ENCODE measurements at regions of chr17 and their contacts with region 1.

Region 1: GRCh38 chr17:8138672-8139371 is 13.4 kb downstream of the PER1 start:
- DNase-seq: peak; percentile 95 to 96
- ATAC-seq: peak; percentile 91 to 97 (median 94)
- H3K4me3 ChIP-seq: peak overlapping the region in 7 of 10 donors; percentile 6 to 40 (median 21)
- H3K27ac ChIP-seq: peak overlapping the region; percentile 30 to 84 (median 72)
- H3K4me1 ChIP-seq: peaks cover 2 to 40% (median 28%) of the 10 kb centered on the region in 9 donors
- H3K27me3 ChIP-seq: no peaks in the 10 kb centered on the region
- CTCF ChIP-seq: peak; percentile 84 to 94 (median 90)

Region 2: DNA sequence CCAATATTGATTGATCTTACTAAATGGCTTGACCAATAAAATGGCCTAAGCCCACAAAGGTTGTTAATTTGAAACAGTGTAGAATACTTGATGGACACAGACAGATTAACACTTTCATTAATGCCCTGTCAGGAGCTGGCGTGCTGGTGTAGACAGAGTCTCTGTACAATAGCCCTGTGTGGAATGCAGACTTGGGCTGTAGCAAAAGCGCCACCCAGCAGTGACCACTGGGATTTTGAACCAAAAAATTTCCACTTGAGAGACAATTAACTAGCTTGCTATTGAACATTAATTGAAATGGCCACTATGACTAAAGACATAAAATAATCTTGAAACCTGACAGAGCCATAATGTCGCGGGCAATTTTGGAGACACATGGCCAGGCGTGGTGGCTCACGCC is 156.2 kb before region 1 on chr17:
- intact Hi-C with region 1: no loop called
- DNase-seq: no peak
- ATAC-seq: no peak
- H3K4me3 ChIP-seq: no peak overlapping the region
- H3K27ac ChIP-seq: no peak overlapping the region
- H3K4me1 ChIP-seq: peaks cover 0 to 7% (median 0%) of the 10 kb centered on the region in 9 donors
- H3K27me3 ChIP-seq: peaks cover 0 to 50% (median 12%) of the 10 kb centered on the region in 7 donors
- CTCF ChIP-seq: peak in 1 of 9 donors; percentile 14

Region 3: DNA sequence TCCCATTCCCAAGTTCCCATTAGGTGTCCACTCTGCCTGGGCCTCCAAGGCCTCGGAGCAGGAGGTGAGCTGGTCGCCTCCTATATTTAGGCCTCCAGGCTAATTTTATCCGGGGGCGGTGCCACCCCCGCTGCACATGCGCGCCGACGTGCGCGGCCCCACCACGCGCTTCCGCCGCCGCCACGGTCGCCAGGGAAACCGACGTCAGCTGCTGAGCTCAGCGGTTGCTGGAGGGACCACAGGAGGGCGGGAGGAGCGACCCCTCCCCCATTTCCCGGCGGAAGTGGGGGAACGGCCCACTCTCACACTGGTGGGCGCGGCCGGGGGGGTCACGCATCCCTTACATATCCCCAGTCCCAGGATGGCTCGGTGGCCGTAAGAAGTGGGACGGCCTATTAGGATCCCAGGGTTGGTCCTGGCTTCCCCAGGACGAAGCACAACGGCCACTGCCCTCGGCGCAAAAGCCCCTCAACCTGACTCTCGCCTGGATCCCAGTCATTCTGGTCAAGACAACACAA is 12.4 kb after region 1 on chr17:
- intact Hi-C with region 1: loop called in 5 of 10 experiments (anchors 1 to 2 kb)
- DNase-seq: peak; percentile 94 to 96
- ATAC-seq: peak; percentile 44 to 62 (median 52)
- H3K4me3 ChIP-seq: peak overlapping the region; percentile 53 to 96 (median 78)
- H3K27ac ChIP-seq: peak overlapping the region; percentile 97 to 100 (median 100)
- H3K4me1 ChIP-seq: peaks cover 28 to 76% (median 53%) of the 10 kb centered on the region in 9 donors
- H3K27me3 ChIP-seq: no peaks in the 10 kb centered on the region
- CTCF ChIP-seq: no peak

Region 4: GRCh38 chr17:8156246-8156992 is 17.6 kb after region 1 on chr17:
- intact Hi-C with region 1: loop called in 7 of 10 experiments (anchors 1 to 2 kb)
- DNase-seq: peak; percentile 100
- ATAC-seq: peak; percentile 65 to 75 (median 68)
- H3K4me3 ChIP-seq: peak overlapping the region; percentile 66 to 91 (median 81)
- H3K27ac ChIP-seq: peak overlapping the region; percentile 97 to 100 (median 100)
- H3K4me1 ChIP-seq: peaks cover 19 to 91% (median 51%) of the 10 kb centered on the region in 9 donors
- H3K27me3 ChIP-seq: no peaks in the 10 kb centered on the region
- CTCF ChIP-seq: peak in 4 of 9 donors; percentile 12 to 42 (median 28)

Region 5: DNA sequence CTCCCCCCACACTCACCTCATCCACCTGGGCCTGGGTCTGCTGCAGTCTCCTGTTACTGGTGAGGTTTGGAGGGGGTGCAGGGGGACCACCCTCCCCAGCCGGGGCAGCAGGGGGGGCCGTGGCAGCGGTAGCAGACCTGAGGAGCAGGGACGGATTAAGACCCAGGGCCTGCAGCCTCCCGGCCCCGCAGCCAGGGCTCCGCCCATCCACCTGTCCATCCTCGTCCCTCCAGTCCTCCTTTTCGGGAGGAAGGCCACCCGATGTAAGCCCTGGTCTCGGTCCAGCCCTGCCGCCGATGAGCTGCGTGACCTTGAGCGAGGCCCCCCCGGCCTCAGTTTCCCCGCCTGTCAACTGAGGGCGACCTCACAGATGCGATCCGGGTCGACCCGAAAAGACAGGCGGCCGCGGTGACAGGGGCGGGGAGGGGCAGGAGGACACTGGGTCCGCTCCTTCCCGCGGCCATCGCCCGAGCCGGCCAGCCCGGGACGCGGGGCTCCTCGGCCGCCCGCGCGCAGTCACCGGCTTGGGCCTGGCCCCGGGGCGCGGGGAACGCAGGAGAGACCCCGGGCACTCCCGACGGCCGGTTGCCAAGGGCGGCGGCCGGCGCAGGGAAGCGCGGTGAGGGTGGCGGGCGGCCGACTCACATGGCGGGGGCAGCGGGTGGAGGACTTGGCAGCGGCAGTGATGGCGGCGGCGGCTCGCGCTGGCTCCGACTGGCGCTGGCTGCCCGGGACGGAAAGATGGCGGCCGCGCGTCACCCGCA is 23.6 kb after region 1 on chr17 and contains the start of gene VAMP2:
- intact Hi-C with region 1: loop called in 4 of 10 experiments (anchors 1 to 2 kb)
- DNase-seq: peak; percentile 81 to 86
- ATAC-seq: peak; percentile 20 to 79 (median 58)
- H3K4me3 ChIP-seq: peak within 1 kb of the TSS; percentile 80 to 100 (median 99)
- H3K27ac ChIP-seq: peak within 1 kb of the TSS; percentile 97 to 100 (median 100)
- H3K4me1 ChIP-seq: peaks cover 25 to 71% (median 57%) of the 10 kb centered on the region in 9 donors
- H3K27me3 ChIP-seq: no peaks in the 10 kb centered on the region
- CTCF ChIP-seq: peak in 1 of 9 donors; percentile 23
- total RNA-seq, gene VAMP2: 46.8 to 67.8 (median 62.7) TPM

Region 6: DNA sequence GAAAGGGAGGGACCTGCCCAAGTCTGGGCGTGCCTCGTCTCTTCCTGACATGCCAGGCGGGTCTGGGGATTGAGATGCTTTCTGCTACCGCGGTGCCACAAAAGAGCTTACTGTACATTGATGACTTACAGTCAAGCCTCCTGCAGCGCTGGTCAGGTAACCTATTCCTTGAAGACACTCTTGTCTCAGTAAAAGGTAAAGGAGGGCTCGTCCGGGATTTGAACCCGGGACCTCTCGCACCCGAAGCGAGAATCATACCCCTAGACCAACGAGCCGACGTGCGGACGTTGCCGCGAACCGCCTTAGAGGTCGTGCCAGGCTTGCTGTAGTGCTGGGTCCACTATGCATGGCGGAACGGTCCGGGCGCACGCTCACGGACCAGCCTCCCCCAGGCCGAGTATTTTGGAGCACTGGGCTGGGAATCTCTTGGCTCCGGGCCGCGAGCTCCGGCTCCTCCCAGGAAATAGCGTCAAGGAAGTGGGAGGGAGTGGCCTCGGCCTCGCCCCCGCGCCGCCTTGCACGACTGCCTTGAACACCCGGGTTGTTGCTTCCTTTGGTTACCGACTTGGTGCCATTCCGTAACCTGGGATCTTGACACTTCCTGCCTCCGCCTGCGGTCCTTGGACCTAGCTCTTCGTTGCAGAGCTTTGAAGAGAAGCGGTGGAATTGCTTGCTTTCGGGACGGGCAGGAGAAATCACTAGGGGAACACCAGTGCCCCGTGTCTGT is 84.0 kb after region 1 on chr17:
- intact Hi-C with region 1: loop called in 1 of 10 experiments (anchors 5 kb)
- DNase-seq: peak; percentile 95
- ATAC-seq: peak; percentile 72 to 85 (median 79)
- H3K4me3 ChIP-seq: peak overlapping the region; percentile 45 to 92 (median 66)
- H3K27ac ChIP-seq: peak overlapping the region; percentile 94 to 99 (median 97)
- H3K4me1 ChIP-seq: peaks cover 7 to 68% (median 18%) of the 10 kb centered on the region in 9 donors
- H3K27me3 ChIP-seq: no peaks in the 10 kb centered on the region
- CTCF ChIP-seq: no peak

Region 7: DNA sequence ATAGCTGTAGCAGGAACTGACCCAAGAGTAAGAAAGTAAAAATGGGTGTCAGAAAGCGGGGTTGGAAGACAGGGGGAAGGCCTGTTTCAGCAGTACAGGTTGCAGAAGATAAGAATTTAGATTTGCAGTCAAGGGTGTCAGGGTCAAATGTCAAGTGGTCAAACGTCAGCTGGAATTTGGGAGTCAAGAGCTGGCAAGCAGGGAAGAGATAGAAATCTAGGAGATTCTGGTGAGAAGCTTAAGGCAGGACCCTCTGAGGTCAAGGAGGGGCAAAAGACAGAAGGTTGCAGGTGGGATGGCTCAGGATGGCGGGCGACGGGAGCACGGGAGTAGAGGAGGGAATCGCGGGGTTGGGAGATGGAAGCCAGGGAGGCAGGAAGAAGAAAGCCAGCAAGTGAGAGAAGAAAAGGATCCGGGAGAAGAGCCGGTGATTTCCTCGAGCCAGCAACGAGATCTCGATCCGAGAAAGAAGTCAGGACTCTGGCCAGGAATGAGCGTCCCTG is 156.0 kb after region 1 on chr17:
- intact Hi-C with region 1: loop called in 1 of 10 experiments (anchors 5 kb)
- DNase-seq: no peak
- ATAC-seq: peak; percentile 1 to 27 (median 6)
- H3K4me3 ChIP-seq: peak overlapping the region; percentile 10 to 87 (median 65)
- H3K27ac ChIP-seq: peak overlapping the region; percentile 81 to 99 (median 89)
- H3K4me1 ChIP-seq: peaks cover 8 to 27% (median 13%) of the 10 kb centered on the region in 9 donors
- H3K27me3 ChIP-seq: no peaks in the 10 kb centered on the region
- CTCF ChIP-seq: no peak

Measured in heart right ventricle (tissue), 16 donors.